ENCODE measurements at regions of chr2 and their contacts with region 1.

Region 1: GRCh38 chr2:73736855-73737779 is at the start of gene TPRKB:
- DNase-seq: peak; percentile 95
- H3K4me3 Mint-ChIP-seq: peak within 1 kb of the TSS; percentile 97
- H3K27ac Mint-ChIP-seq: peak within 1 kb of the TSS; percentile 87
- H3K4me1 Mint-ChIP-seq: peaks cover 8% of the 10 kb centered on the region
- H3K27me3 Mint-ChIP-seq: no peaks in the 10 kb centered on the region
- total RNA-seq, gene TPRKB: 31.9 and 36.0 TPM in 2 replicates

Region 2: DNA sequence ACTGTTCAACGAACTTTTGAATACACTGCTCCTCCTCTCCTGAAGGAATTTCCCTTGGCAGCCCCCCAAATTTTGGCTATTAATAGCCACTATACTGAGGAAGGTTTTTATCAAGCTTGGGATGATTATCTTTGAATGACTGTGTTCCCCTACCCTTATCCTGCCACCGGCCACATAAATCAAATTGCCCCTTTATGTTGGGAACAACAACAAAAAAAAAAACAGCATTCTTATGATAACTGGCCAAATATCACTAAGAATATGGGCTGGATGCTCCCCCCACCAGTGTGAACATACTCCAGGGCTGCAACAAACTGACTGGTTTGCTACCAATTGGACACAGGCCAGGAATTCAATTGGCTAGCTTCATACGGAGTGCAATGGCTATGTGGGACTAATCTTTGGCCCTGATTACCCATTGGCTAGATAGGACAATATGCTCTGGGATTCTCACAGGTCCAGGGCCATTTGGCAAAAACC is 22.2 kb after region 1 on chr2:
- intact Hi-C with region 1: no loop called
- DNase-seq: no peak
- H3K4me3 Mint-ChIP-seq: no peak overlapping the region
- H3K27ac Mint-ChIP-seq: no peak overlapping the region
- H3K4me1 Mint-ChIP-seq: no peaks in the 10 kb centered on the region
- H3K27me3 Mint-ChIP-seq: no peaks in the 10 kb centered on the region

Region 3: DNA sequence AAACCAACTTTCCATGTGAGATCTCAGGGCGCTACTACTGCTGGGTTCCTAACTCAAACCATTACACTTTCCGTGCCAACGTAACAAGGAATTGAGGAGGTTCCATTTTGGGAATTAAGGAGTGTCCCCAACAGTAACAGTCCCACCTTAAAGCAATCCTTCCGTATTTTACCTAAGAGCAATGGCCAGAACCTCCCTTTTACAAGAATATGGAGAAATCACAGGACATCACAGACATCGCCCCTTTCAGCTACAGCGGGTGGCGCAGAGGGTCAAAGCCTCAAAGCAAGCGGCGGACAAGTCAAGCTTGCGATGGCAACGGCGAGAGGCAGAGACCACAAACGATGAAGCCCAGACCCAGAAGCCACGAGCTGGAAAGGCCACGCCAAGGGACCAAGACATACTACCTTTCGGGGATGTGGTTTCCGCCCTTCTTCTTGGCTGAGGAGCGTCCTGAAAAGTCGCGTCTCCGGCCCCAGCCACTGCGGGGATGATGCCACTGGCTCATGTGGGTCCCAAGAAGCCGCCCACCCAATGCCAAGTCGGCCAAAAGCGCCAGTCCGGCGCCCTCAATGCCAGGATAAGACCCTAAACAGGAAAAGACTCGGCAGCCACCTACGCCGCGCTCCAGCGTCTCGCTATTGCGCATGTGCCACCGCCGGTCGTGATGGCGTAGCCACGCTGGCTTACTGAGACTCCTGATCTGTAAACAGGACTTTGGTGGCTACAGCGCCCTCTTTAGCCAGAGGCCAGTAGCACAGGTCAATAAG is 42.5 kb after region 1 on chr2 and contains the start of gene DUSP11:
- intact Hi-C with region 1: loop called (anchors 1 kb)
- DNase-seq: peak; percentile 94
- H3K4me3 Mint-ChIP-seq: peak within 1 kb of the TSS; percentile 91
- H3K27ac Mint-ChIP-seq: peak within 1 kb of the TSS; percentile 95
- H3K4me1 Mint-ChIP-seq: peaks cover 13% of the 10 kb centered on the region
- H3K27me3 Mint-ChIP-seq: peaks cover 3% of the 10 kb centered on the region
- total RNA-seq, gene DUSP11: 35.2 and 40.1 TPM in 2 replicates

Measured in activated T-helper 2 cell treated with anti-CD3 and anti-CD28 coated beads, Interferon-gamma antibody, Interleukin-2, Interleukin-4, amounts not matched to agents 10 μg/mL and 5 μg/mL and 100 μg/mL, durations not matched to agents 14 hours and 24 hours and 36 hours (primary cell).